Ascending aorta (tissue), 2 donors: ENCODE measurements at regions of chr9 and their contacts with region 1.

Region 1: DNA sequence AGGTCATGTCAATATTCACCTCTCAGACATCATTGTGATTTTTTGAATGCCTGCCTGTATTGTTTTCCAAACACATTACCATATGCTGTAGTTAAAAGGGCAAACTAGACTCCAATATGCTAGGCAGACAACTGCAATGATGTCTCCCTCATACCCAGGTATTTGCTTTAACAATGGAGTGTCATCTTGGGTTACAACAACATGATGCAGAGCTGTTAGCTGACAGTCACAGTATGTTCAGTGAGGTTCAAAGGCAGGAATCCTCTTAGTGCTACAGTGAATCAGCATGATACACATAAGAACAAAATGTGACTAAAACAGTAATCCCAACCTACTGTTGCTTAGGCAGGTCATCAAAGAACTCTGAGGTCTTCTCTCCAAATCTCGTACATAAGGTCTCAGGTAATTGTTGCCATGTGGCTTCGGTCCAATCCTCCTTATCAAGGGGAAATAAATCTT is 24.0 kb downstream of the OR1J1 start:
- DNase-seq: no peak
- H3K4me3 ChIP-seq: no peak overlapping the region
- H3K27ac ChIP-seq: no peak overlapping the region
- H3K4me1 ChIP-seq: no peaks in the 10 kb centered on the region
- H3K27me3 ChIP-seq: no peaks in the 10 kb centered on the region
- CTCF ChIP-seq: no peak

Region 2: DNA sequence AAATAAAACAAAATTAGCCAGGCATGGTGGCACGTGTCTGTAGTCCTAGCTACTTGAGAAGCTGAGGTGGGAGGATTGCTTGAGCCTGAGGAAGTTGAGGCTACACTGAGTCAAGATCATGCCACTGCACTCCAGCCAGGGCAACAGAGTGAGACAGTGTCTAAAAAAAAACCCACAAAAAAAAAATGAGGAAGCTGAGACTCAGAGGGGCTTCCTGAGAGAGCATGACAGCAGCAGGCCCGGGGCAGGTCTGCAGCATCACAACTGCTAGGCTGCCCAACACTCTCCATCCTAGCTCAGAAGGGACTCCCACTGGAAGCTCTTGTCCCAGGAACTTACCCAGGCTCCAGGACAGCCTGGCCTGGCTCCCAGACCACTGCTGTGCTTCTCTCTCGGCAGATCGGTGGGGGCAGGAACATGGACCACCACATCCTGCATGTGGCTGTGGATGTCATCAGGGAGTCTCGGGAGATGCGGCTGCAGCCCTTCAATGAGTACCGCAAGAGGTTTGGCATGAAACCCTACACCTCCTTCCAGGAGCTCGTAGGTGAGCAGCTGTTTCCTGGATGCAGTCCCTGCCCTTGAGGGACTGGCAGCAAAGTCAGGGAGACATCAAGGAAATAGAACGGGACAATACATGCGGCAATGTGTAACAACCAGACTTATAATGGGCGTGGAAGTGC is 63.8 kb before region 1 on chr9:
- intact Hi-C with region 1: loop called (anchors 10 kb)
- DNase-seq: peak in 1 of 2 donors; percentile 33
- H3K4me3 ChIP-seq: no peak overlapping the region
- H3K27ac ChIP-seq: no peak overlapping the region
- H3K4me1 ChIP-seq: no peaks in the 10 kb centered on the region
- H3K27me3 ChIP-seq: no peaks in the 10 kb centered on the region
- CTCF ChIP-seq: no peak